ENCODE measurements at regions of chr19 and their contacts with region 1.

Region 1: GRCh38 chr19:31883296-31883990 is 462.0 kb upstream of the ZNF507 start:
- DNase-seq: no peak
- ATAC-seq: no peak

Region 2: GRCh38 chr19:31962561-31962996 is 79.1 kb after region 1 on chr19:
- intact Hi-C with region 1: loop called (anchors 5 kb)
- DNase-seq: no peak
- ATAC-seq: peak; percentile 41

Measured in Right ventricle myocardium inferior (tissue), 1 donor.